ENCODE measurements at regions of chr7 and their contacts with region 1.

Region 1: GRCh38 chr7:22726345-22727185 is 435 bp upstream of the IL6 start:
- DNase-seq: peak in 5 of 7 donors; percentile 32 to 61 (median 36)
- H3K4me3 ChIP-seq: peak overlapping the region in 2 of 4 donors; percentile 24 to 43
- H3K27ac ChIP-seq: peak overlapping the region in 4 of 5 donors; percentile 8 to 84 (median 48)
- H3K4me1 ChIP-seq: peaks cover 4 to 27% of the 10 kb centered on the region in 2 donors
- H3K27me3 ChIP-seq: no peaks in the 10 kb centered on the region
- CTCF ChIP-seq: peak in 5 of 6 experiments; percentile 12 to 51 (median 40)
- POLR2A ChIP-seq: no peak

Region 2: DNA sequence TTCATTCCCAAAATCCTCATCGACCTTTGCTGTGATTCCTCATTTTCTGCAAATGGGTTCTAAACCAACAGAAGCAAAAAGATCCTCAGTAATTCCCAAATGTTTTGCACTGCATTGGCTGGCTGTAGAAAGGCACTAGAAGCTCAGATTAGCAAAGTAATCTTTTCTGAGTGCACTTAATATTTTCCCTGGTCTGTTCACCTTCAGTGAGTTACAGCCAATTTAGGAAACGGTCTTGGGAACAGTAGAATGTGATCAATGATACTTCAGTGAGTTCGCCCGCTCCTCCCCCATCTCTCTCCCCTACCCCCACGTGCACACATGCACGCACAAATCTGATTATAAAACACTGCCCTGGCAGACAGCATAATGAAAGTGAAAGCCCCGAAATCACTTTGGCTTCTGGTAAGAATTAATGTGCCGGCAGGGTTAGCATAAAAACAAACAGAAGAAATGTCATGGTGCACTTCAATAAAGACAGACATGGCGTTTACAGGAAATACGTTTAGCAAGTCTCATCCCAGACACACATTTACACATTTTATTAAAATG is 579.5 kb before region 1 on chr7:
- intact Hi-C with region 1: no loop called
- DNase-seq: peak in 2 of 7 donors; percentile 18 to 64
- H3K4me3 ChIP-seq: peak overlapping the region in 1 of 4 donors; percentile 29
- H3K27ac ChIP-seq: peak overlapping the region in 1 of 5 donors; percentile 25
- H3K4me1 ChIP-seq: no peaks in the 10 kb centered on the region
- H3K27me3 ChIP-seq: no peaks in the 10 kb centered on the region
- CTCF ChIP-seq: no peak
- POLR2A ChIP-seq: no peak

Region 3: DNA sequence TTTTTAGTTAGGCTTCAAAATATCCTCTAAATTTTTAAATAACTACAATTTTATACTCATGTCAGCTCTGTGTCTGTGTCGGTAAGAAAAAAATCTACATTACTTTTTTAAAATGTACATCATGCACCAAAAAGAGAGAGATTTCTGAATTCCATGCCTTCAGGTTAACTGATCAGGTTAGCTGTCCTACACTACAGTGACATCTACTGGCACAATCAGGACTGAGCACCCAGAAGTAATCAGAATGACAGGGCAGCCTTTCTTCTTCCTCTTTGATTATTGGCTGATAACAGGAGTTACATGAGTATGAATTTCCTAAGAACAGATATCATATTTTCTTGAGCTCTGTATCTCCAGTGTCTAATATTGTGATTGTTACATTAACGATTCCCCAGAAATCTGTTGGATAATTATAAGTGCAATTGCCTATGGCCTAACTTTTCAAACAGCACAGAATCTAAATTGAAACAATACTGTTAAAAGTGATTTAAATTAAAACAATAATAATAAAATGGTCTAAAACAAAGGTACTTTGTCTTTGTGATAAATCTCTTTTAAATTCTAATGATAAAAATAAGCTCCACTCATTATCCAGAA is 329.1 kb after region 1 on chr7:
- intact Hi-C with region 1: loop called in 1 of 2 experiments (anchors 10 kb)
- DNase-seq: peak; percentile 42 to 82 (median 56)
- H3K4me3 ChIP-seq: no peak overlapping the region
- H3K27ac ChIP-seq: no peak overlapping the region
- H3K4me1 ChIP-seq: no peaks in the 10 kb centered on the region
- H3K27me3 ChIP-seq: no peaks in the 10 kb centered on the region
- CTCF ChIP-seq: peak; percentile 47 to 93 (median 88)
- POLR2A ChIP-seq: no peak